Left lung (tissue), 14 donors: ENCODE measurements at regions of chr20 and their contacts with region 1.

Region 1: GRCh38 chr20:38057351-38057972 is 23.9 kb downstream of the RPRD1B start:
- DNase-seq: peak; percentile 63 to 91 (median 80)
- ATAC-seq: peak; percentile 83
- H3K4me3 ChIP-seq: no peak overlapping the region
- H3K27ac ChIP-seq: no peak overlapping the region
- H3K4me1 ChIP-seq: peaks cover 4 to 6% of the 10 kb centered on the region in 2 donors
- H3K27me3 ChIP-seq: no peaks in the 10 kb centered on the region
- CTCF ChIP-seq: peak; percentile 86 to 87

Region 2: DNA sequence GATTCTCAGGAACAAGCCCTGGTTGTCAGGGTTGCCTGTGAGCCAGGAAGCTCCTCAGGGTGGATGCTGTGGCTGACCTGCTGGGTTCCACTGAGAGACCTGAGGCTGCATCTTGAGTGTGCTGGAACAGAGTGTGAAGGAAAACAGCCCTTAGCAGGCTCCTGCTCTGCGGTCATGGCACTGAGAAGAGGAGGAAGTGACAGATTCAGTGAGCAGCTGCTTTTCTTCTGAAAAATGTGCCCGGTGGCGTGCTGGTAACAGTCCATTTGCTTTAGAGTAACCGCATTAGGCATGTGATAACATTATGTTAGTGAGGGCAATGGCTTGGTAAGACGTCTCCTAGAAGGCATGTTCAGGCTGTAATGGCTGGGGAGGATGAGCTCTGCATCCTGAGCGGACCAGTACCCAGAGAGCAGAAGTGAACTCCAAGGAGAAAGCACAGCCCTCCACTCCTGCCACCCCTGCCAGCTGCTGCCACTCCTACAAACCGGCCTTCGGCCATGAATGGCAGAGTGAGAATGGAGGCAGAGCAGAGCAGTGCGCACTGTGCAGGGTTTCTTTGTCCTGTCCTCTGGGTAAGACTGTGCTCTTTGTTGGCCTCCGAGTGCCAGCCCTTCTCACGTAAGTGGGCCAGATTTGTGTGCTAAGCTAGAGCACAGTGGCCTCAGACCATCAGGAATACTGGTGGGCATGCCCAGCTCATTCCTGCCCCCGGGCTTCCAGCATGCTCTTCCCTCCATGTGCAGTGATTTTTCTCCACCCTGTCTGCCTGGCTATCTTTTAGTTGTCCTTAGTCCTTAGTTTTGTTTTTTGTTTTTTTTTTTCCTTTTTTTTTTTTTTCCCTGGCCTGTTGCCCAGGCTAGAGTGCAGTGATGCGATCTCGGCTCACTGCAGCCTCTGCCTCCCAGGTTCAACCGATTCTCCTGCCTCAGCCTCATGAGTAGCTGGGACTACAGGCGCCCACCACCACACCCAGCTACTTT is 252.6 kb before region 1 on chr20:
- intact Hi-C with region 1: no loop called
- DNase-seq: peak in 1 of 4 donors; percentile 4
- ATAC-seq: no peak
- H3K4me3 ChIP-seq: no peak overlapping the region
- H3K27ac ChIP-seq: peak overlapping the region in 1 of 2 donors; percentile 33
- H3K4me1 ChIP-seq: peaks cover 0 to 15% of the 10 kb centered on the region in 2 donors
- H3K27me3 ChIP-seq: no peaks in the 10 kb centered on the region
- CTCF ChIP-seq: no peak

Region 3: DNA sequence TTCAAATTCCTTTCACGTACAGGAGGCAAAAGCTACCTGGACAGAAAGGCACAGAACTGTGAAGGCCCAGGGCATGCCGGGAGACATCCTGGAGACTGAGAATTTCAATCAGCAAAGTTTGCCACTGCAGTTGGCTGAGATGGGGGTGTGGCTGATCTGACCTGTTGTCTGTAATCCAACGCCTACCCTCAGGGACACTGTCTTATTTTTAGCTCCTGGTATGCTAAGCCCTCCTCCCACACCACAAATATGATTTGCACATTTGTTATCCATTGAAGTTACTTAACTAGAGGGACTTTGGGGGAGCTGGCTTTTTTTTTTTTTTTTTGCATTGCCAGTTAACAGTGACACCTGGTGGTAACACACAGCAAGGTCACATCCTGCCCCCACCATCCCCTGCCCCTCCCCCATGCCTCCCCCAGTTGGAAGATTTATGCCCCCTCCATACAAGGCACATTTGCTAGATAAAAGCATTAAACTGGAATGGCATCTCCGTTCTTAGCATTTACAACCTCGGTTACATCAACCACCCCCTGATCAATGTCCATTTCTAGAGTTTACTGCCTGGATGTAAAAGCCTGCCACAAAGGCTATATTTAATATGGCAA is 64.6 kb before region 1 on chr20:
- intact Hi-C with region 1: no loop called
- DNase-seq: peak in 1 of 4 donors; percentile 51
- ATAC-seq: peak; percentile 68
- H3K4me3 ChIP-seq: no peak overlapping the region
- H3K27ac ChIP-seq: peak overlapping the region in 1 of 2 donors; percentile 4
- H3K4me1 ChIP-seq: peaks cover 39 to 57% of the 10 kb centered on the region in 2 donors
- H3K27me3 ChIP-seq: no peaks in the 10 kb centered on the region
- CTCF ChIP-seq: peak; percentile 48 to 61

Region 4: DNA sequence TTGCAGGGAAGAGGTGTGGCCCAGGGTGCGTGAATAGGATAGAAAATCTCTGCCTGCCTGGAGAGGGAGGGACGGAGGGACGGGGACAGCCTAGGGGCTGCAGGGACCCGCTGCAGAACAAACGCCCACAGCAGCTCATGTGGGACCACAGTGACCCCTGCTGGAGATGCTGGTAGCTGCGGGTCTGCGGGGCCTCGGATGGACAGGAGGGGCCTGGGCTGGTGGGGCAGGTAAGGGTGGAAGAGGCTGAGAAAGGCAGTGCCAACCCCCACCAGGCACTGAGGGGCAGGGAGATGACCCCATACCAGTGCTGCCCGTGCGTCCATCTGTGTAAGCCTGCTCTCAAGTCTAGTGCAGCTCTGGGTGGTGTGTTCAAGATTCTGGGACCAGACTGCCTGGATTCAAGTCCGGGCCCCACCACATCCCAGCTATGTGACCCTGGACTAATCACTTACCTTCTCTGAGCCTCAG is 163.7 kb after region 1 on chr20:
- intact Hi-C with region 1: loop called in 1 of 2 experiments (anchors 5 kb)
- DNase-seq: peak; percentile 69 to 91 (median 75)
- ATAC-seq: peak; percentile 86
- H3K4me3 ChIP-seq: no peak overlapping the region
- H3K27ac ChIP-seq: no peak overlapping the region
- H3K4me1 ChIP-seq: peaks cover 2 to 7% of the 10 kb centered on the region in 2 donors
- H3K27me3 ChIP-seq: no peaks in the 10 kb centered on the region
- CTCF ChIP-seq: peak; percentile 88 to 92